Activated CD4-positive, alpha-beta memory T cell treated with anti-CD3 and anti-CD28 coated beads, Interleukin-2, amount 10 ng/mL, durations not matched to agents 7 days and 5 days (primary cell): ENCODE measurements at regions of chr4 and their contacts with region 1.

Region 1: GRCh38 chr4:112231779-112232713 is at the start of gene AP1AR:
- DNase-seq: peak; percentile 81
- H3K4me3 Mint-ChIP-seq: peak within 1 kb of the TSS; percentile 83
- H3K27ac Mint-ChIP-seq: peak within 1 kb of the TSS; percentile 96
- H3K4me1 Mint-ChIP-seq: peaks cover 38% of the 10 kb centered on the region
- H3K27me3 Mint-ChIP-seq: peaks cover 1% of the 10 kb centered on the region
- total RNA-seq, gene AP1AR: 10.9 to 17.2 TPM

Region 2: GRCh38 chr4:112099701-112100297 is 132.2 kb before region 1 on chr4:
- CTCF ChIA-PET with region 1: interaction called, 74 read pairs
- POLR2A ChIA-PET with region 1: interaction called, 5 read pairs
- DNase-seq: no peak
- H3K4me3 Mint-ChIP-seq: no peak overlapping the region
- H3K27ac Mint-ChIP-seq: no peak overlapping the region
- H3K4me1 Mint-ChIP-seq: peaks cover 2% of the 10 kb centered on the region
- H3K27me3 Mint-ChIP-seq: peaks cover 24% of the 10 kb centered on the region

Region 3: GRCh38 chr4:112214390-112215264 is 17.4 kb before region 1 on chr4:
- CTCF ChIA-PET with region 1: interaction called, 11 read pairs
- POLR2A ChIA-PET with region 1: interaction called, 5 read pairs
- DNase-seq: no peak
- H3K4me3 Mint-ChIP-seq: no peak overlapping the region
- H3K27ac Mint-ChIP-seq: no peak overlapping the region
- H3K4me1 Mint-ChIP-seq: peaks cover 7% of the 10 kb centered on the region
- H3K27me3 Mint-ChIP-seq: no peaks in the 10 kb centered on the region

Region 4: DNA sequence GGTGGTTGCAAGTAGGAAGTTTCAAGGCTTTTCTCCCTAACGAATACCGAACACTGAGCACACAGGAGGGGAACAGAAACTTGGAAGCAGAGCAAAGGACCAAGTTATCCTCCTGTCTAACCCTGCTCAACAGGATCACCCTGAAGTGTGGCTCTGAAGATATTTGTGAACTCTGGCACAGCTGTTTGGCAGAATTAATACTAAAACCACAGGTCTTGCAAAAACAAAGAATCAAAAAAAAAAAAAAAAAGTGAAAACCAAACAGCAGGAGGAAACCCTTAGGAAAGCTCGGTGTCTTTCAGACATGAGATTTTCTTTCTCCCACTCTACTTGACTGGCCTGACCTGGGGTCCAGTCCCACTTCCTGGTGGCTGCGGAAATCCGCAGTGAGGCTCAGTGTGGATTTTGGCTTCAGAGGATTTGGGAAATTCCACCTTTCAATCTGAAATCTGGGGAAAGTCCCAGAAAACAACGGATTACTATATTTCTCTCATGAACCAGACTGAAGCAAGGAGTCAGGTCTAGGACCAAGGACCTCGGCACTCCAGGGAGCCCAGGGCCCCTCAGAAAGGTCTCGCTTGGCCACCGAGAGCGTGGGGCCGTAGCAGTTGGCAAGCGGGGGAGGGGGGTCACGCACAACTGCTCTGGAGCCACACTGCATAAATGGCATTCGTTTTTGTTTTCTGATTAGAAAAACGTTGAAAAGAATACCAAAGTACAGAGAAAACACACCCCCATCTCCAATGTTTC is 52.8 kb after region 1 on chr4:
- CTCF ChIA-PET with region 1: interaction called, 4 read pairs
- POLR2A ChIA-PET with region 1: interaction called, 45 read pairs
- DNase-seq: no peak
- H3K4me3 Mint-ChIP-seq: peak overlapping the region; percentile 92
- H3K27ac Mint-ChIP-seq: peak overlapping the region; percentile 81
- H3K4me1 Mint-ChIP-seq: peaks cover 81% of the 10 kb centered on the region
- H3K27me3 Mint-ChIP-seq: no peaks in the 10 kb centered on the region